Dendritic cell treated with granulocyte-macrophage colony-stimulating factor and Interleukin-4, amounts not matched to agents 40 ng/mL and 50 ng/mL, for 4 days (primary cell): ENCODE measurements at regions of chr13 and their contacts with region 1.

Region 1: DNA sequence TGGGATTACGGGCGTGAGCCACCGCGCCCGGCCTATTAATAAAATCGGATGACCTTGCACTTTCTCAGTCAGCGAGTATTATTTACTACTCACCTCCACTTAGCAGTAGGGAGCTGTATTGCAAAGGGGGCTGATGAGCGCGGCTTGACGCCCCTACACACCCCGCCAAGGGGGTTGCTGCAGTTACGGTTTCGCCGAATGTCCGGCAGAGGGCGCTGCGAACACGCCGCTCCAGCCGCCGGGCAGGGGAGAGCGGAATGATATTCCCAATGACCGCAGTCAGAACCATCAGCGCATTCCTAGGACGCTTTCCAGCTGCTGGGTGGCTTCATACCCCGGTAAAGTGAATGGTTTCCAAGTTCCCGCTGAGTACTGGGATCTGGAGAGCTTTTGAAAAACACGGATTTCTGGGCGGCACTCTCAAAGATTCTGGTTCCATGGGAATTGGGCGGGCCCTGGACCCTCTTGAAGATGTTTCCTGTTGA is 30.0 kb upstream of the TPT1 start:
- H3K4me3 Mint-ChIP-seq: no peak overlapping the region
- H3K27ac Mint-ChIP-seq: peak overlapping the region; percentile 35
- H3K4me1 Mint-ChIP-seq: peaks cover 27% of the 10 kb centered on the region
- H3K27me3 Mint-ChIP-seq: peaks cover 11% of the 10 kb centered on the region

Region 2: DNA sequence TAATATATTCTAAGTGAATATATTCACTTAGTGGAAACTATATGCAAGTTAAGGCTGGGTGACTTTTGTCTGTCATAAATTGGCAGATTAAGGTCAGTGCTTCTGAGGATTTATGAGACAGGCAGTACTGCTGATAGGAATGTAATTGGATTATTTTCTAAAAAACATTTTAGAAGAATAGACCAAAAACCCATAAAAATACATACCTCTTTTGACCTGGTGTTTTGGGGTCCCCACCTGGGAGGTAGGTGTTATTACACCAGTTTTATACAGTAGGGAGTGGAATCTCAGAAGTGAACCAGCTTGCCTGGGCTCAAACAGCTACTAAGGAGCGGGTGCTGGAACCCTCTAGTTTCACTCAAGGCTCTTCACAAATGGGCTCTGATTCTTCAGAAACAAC is 119.1 kb after region 1 on chr13:
- intact Hi-C with region 1: loop called (anchors 10 kb)
- H3K4me3 Mint-ChIP-seq: no peak overlapping the region
- H3K27ac Mint-ChIP-seq: no peak overlapping the region
- H3K4me1 Mint-ChIP-seq: no peaks in the 10 kb centered on the region
- H3K27me3 Mint-ChIP-seq: no peaks in the 10 kb centered on the region